ENCODE measurements at regions of chr17 and their contacts with region 1.

Region 1: DNA sequence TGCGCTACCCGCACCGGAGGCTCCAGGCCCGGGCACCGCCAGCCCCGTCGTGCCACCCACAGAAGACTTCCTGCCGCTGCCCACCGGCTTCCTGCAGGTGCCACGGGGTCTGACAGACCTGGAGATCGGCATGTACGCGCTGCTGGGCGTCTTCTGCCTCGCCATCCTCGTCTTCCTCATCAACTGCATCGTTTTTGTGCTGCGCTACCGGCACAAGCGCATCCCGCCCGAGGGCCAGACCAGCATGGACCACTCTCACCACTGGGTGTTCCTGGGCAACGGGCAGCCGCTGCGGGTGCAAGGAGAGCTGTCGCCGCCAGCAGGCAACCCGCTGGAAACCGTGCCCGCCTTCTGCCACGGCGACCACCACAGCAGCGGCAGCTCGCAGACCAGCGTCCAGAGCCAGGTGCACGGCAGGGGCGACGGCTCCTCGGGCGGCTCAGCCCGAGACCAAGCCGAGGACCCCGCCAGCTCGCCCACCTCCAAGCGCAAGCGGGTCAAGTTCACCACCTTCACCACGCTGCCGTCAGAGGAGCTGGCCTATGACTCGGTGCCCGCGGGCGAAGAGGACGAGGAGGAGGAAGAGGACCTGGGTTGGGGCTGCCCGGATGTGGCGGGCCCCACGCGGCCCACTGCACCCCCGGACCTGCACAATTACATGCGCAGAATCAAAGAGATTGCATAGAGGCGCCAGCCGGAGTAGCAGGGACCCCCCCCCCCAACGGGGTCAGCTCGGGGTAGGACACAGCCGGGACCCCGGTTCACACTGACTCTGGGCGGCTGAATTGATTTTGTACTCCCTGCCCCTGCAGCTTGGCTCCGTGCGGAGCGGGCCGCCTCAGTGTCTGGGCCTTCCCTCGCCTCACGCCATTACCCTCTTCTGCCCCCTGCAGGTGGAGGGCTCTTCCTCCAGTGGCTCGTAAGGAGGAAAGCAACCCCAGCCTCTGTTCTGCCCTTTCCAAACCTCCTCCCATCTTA is 58.5 kb downstream of the TMEM132E start:
- DNase-seq: peak; percentile 89
- H3K4me3 Mint-ChIP-seq: peak overlapping the region; percentile 63
- H3K27ac Mint-ChIP-seq: no peak overlapping the region
- H3K4me1 Mint-ChIP-seq: peaks cover 2% of the 10 kb centered on the region
- H3K27me3 Mint-ChIP-seq: peaks cover 3% of the 10 kb centered on the region

Region 2: GRCh38 chr17:34420254-34420766 is 217.5 kb before region 1 on chr17:
- CTCF ChIA-PET with region 1: interaction called, 5 read pairs
- intact Hi-C with region 1: loop called (anchors 1 kb)
- DNase-seq: peak; percentile 77
- H3K4me3 Mint-ChIP-seq: no peak overlapping the region
- H3K27ac Mint-ChIP-seq: no peak overlapping the region
- H3K4me1 Mint-ChIP-seq: no peaks in the 10 kb centered on the region
- H3K27me3 Mint-ChIP-seq: peaks cover 32% of the 10 kb centered on the region

Region 3: GRCh38 chr17:34542700-34543336 is 95.0 kb before region 1 on chr17:
- CTCF ChIA-PET with region 1: interaction called, 25 read pairs
- intact Hi-C with region 1: loop called (anchors 1 kb)
- DNase-seq: peak; percentile 68
- H3K4me3 Mint-ChIP-seq: no peak overlapping the region
- H3K27ac Mint-ChIP-seq: no peak overlapping the region
- H3K4me1 Mint-ChIP-seq: no peaks in the 10 kb centered on the region
- H3K27me3 Mint-ChIP-seq: peaks cover 29% of the 10 kb centered on the region

Region 4: GRCh38 chr17:34584805-34585416 is 52.9 kb before region 1 on chr17:
- CTCF ChIA-PET with region 1: interaction called, 5 read pairs
- intact Hi-C with region 1: loop called (anchors 2 kb)
- DNase-seq: no peak
- H3K4me3 Mint-ChIP-seq: no peak overlapping the region
- H3K27ac Mint-ChIP-seq: no peak overlapping the region
- H3K4me1 Mint-ChIP-seq: peaks cover 8% of the 10 kb centered on the region
- H3K27me3 Mint-ChIP-seq: peaks cover 50% of the 10 kb centered on the region

Measured in activated naive CD4-positive, alpha-beta T cell treated with anti-CD3 and anti-CD28 coated beads for 36 hours (primary cell).